ENCODE measurements at regions of chr1 and their contacts with region 1.

Region 1: GRCh38 chr1:89820422-89821321 is at the start of gene LRRC8D:
- DNase-seq: peak; percentile 79
- ATAC-seq: peak; percentile 96
- H3K4me3 ChIP-seq: peak within 1 kb of the TSS; percentile 84 to 89 (median 86)
- H3K27ac ChIP-seq: peak within 1 kb of the TSS; percentile 97
- H3K4me1 ChIP-seq: peaks cover 56% of the 10 kb centered on the region
- H3K27me3 ChIP-seq: no peaks in the 10 kb centered on the region; a peak in 1 of 5 replicates
- CTCF ChIP-seq: peak; percentile 24; the same call in 1 of the 2 replicates
- EP300 ChIP-seq: no peak
- POLR2A ChIP-seq: peak; percentile 63 to 75
- RAD21 ChIP-seq: peak; percentile 8; the same call in 1 of the 2 replicates
- total RNA-seq, gene LRRC8D: 44.6 and 45.5 TPM in 2 replicates

Region 2: GRCh38 chr1:89804642-89805237 is 15.9 kb before region 1 on chr1:
- CTCF ChIA-PET with region 1: no interaction called
- POLR2A ChIA-PET with region 1: interaction called, 17 read pairs
- in situ Hi-C with region 1: no loop called
- intact Hi-C with region 1: no loop called
- DNase-seq: peak; percentile 74
- ATAC-seq: peak; percentile 90
- H3K4me3 ChIP-seq: no peak overlapping the region
- H3K27ac ChIP-seq: no peak overlapping the region
- H3K4me1 ChIP-seq: peaks cover 29% of the 10 kb centered on the region
- H3K27me3 ChIP-seq: peaks cover 0 to 8% of the 10 kb centered on the region in 2 experiments; a peak in 3 of 5 replicates
- CTCF ChIP-seq: peak; percentile 90
- EP300 ChIP-seq: no peak
- POLR2A ChIP-seq: no peak
- RAD21 ChIP-seq: peak; percentile 85

Region 3: GRCh38 chr1:89843281-89844121 is 22.8 kb after region 1 on chr1:
- CTCF ChIA-PET with region 1: no interaction called
- POLR2A ChIA-PET with region 1: interaction called, 38 read pairs
- in situ Hi-C with region 1: no loop called
- intact Hi-C with region 1: no loop called
- DNase-seq: no peak
- ATAC-seq: peak; percentile 93
- H3K4me3 ChIP-seq: peak overlapping the region; percentile 55 to 73 (median 60)
- H3K27ac ChIP-seq: peak overlapping the region; percentile 75
- H3K4me1 ChIP-seq: peaks cover 64% of the 10 kb centered on the region
- H3K27me3 ChIP-seq: no peaks in the 10 kb centered on the region
- CTCF ChIP-seq: peak; percentile 68; the same call in 1 of the 2 replicates
- EP300 ChIP-seq: no peak
- POLR2A ChIP-seq: no peak; a peak in 1 of 4 replicates
- RAD21 ChIP-seq: peak; percentile 70

Region 4: DNA sequence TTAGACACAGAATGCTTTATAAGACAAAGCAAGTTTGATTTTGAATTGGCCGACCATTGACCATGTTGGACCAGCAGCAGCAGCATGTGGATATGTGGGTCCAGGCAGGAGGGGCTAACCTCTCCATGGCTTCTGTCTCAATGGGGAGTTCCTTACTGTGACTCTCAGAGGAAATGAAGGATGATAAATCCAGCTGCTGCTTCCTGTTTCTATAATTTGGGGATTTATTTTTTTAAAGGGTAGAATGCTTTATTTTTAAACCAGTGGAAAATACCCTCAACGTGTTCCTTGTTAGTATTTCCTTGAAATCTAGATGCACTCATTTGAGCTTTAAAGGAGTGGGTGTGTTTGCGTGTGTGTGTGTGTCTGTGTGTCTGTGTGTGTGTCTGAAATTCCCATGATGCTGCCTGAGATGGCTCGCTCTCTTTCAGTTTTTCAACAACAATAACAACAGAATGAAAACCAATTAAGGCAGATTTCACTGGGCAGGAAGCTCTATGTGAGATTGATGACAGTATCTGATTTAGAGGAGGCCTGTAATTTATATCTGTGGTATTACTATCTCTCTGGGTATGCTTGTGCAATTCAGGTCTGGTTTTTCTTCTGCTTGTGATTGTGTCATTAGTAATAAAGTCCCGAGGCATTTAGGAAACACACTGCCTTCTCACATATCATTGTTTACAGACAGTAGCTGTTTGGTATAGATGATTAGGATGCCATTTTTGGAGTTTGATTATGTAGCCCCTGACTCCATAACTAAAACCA is 88.2 kb after region 1 on chr1:
- CTCF ChIA-PET with region 1: no interaction called
- POLR2A ChIA-PET with region 1: interaction called, 4 read pairs
- in situ Hi-C with region 1: no loop called
- intact Hi-C with region 1: loop called (anchors 5 kb)
- DNase-seq: no peak
- ATAC-seq: no peak
- H3K4me3 ChIP-seq: no peak overlapping the region
- H3K27ac ChIP-seq: no peak overlapping the region
- H3K4me1 ChIP-seq: peaks cover 58% of the 10 kb centered on the region
- H3K27me3 ChIP-seq: no peaks in the 10 kb centered on the region
- CTCF ChIP-seq: no peak
- EP300 ChIP-seq: no peak
- POLR2A ChIP-seq: no peak
- RAD21 ChIP-seq: no peak

Region 5: GRCh38 chr1:89919174-89919573 is 98.5 kb after region 1 on chr1:
- CTCF ChIA-PET with region 1: no interaction called
- POLR2A ChIA-PET with region 1: no interaction called
- in situ Hi-C with region 1: no loop called
- intact Hi-C with region 1: no loop called
- DNase-seq: no peak
- ATAC-seq: no peak
- H3K4me3 ChIP-seq: no peak overlapping the region
- H3K27ac ChIP-seq: no peak overlapping the region
- H3K4me1 ChIP-seq: no peaks in the 10 kb centered on the region
- H3K27me3 ChIP-seq: no peaks in the 10 kb centered on the region
- CTCF ChIP-seq: no peak
- EP300 ChIP-seq: no peak
- POLR2A ChIP-seq: no peak
- RAD21 ChIP-seq: no peak

Region 6: GRCh38 chr1:89953072-89953626 is 132.5 kb after region 1 on chr1:
- CTCF ChIA-PET with region 1: no interaction called
- POLR2A ChIA-PET with region 1: interaction called, 10 read pairs
- in situ Hi-C with region 1: no loop called
- intact Hi-C with region 1: no loop called
- DNase-seq: peak; percentile 49
- ATAC-seq: peak; percentile 74
- H3K4me3 ChIP-seq: no peak overlapping the region
- H3K27ac ChIP-seq: no peak overlapping the region
- H3K4me1 ChIP-seq: peaks cover 87% of the 10 kb centered on the region
- H3K27me3 ChIP-seq: no peaks in the 10 kb centered on the region
- CTCF ChIP-seq: peak; percentile 76
- EP300 ChIP-seq: no peak
- POLR2A ChIP-seq: no peak
- RAD21 ChIP-seq: peak; percentile 56; the same call in 1 of the 2 replicates

Region 7: DNA sequence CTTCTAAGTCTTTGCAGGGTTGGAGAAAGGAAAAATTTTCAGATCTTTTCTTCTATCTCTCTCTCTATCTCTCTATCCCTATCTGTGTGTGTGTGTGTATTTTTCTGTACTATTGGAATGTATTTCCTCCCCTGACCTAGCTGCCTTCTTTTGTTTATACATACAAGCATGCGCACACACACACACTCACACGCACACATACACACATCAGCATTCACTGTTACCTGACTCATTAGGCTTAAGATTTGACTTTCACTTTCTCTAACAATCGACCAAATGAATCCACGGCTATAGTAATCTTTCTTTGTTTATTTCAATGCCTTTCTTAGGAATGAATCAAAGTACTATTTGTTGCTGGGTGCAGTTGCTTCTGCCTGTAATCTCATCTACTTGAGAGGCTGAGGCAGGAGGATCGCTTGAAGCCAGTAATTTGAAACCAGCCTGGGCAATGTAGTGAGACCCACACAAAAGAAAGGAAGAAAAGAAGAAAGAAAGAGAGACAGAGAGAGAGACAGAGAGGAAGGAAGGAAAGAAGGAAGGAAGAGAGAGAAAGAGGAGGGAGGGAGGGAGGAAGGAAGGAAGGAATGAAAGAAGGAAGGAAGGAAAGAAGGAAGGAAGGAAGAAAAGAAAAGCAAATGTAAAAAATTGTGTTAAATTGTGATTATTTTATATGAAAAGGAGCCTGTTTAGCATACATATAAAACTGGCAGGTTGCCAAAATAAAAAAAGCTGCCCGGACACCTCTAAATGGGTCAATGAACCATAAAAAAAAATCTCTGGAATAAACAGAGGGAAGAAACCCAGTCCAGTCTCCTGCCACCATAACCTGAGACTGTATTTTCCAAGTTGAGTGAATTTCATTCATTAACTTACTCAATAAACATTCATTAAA is 381.0 kb after region 1 on chr1:
- CTCF ChIA-PET with region 1: no interaction called
- POLR2A ChIA-PET with region 1: no interaction called
- in situ Hi-C with region 1: no loop called
- intact Hi-C with region 1: no loop called
- DNase-seq: no peak
- ATAC-seq: no peak
- H3K4me3 ChIP-seq: no peak overlapping the region
- H3K27ac ChIP-seq: no peak overlapping the region
- H3K4me1 ChIP-seq: no peaks in the 10 kb centered on the region
- H3K27me3 ChIP-seq: no peaks in the 10 kb centered on the region
- CTCF ChIP-seq: no peak
- EP300 ChIP-seq: no peak
- POLR2A ChIP-seq: no peak
- RAD21 ChIP-seq: no peak

Measured in HepG2 (cell line).